ENCODE measurements at regions of chr19 and their contacts with region 1.

Region 1: DNA sequence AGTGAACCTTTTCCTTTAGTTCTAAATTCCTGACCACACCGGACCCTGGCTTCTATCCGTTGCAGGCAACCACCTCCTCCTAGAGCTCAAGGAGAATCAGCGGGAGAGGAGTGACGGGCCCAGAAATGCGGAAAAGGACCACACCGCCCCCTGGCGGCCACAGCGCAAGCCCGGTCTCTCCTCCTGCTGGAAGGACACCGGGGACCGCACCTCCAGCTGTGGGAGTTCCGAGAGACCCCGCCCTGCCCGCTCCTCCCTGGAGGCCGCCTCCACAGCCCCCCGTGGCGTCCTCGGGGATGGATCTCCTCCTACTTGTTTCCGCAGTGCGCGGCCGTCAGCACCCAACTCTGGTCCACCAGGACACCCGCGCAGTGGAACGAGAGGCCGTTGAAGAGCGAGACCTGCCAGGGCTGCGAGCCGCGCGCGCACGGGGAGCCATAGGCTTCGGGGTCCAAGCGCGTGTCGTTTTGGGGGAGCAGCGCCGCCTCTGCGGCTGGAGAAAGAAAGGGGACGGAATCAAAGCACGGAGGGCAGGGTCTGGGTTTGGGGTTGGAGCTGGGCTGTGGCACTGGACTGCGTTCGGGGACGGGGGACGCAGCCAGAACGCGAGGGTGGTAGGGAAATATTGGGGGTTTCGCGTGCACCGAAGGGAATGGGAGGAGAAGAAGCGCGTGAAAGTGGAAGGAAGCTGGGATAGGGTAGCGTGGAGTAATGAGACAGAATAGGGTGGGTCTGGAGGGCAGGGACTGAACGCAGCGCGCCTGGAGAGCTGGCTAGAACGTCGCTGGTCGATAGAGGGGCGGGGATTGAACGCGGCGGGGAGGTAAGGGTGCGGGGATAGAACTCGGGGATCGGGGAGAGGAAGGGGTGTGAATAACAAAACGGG is 2.5 kb downstream of the KLK10 start:
- DNase-seq: peak in 2 of 3 donors; percentile 12 to 39
- H3K4me3 ChIP-seq: no peak overlapping the region
- H3K4me3 Mint-ChIP-seq: peak overlapping the region; percentile 69 to 95
- H3K27ac ChIP-seq: no peak overlapping the region
- H3K27ac Mint-ChIP-seq: peak overlapping the region in 1 of 7 donors; percentile 57
- H3K4me1 ChIP-seq: peaks cover 24 to 26% of the 10 kb centered on the region in 2 donors
- H3K4me1 Mint-ChIP-seq: peaks cover 34% of the 10 kb centered on the region
- H3K27me3 ChIP-seq: peaks cover 19 to 53% of the 10 kb centered on the region in 2 donors
- H3K27me3 Mint-ChIP-seq: peaks cover 63 to 73% (median 65%) of the 10 kb centered on the region in 3 donors
- CTCF ChIP-seq: peak; percentile 73

Region 2: GRCh38 chr19:51166846-51167490 is 149.9 kb after region 1 on chr19:
- intact Hi-C with region 1: loop called (anchors 5 kb)
- DNase-seq: peak; percentile 58 to 70 (median 64)
- H3K4me3 ChIP-seq: peak overlapping the region in 1 of 3 experiments; percentile 36
- H3K4me3 Mint-ChIP-seq: peak overlapping the region; percentile 39 to 59
- H3K27ac ChIP-seq: peak overlapping the region in 1 of 2 donors; percentile 2
- H3K27ac Mint-ChIP-seq: peak overlapping the region in 6 of 7 donors; percentile 5 to 68 (median 44)
- H3K4me1 ChIP-seq: peaks cover 18 to 19% of the 10 kb centered on the region in 2 donors
- H3K4me1 Mint-ChIP-seq: peaks cover 23% of the 10 kb centered on the region
- H3K27me3 ChIP-seq: no peaks in the 10 kb centered on the region
- H3K27me3 Mint-ChIP-seq: peaks cover 0 to 8% (median 3%) of the 10 kb centered on the region in 3 donors
- CTCF ChIP-seq: no peak

Region 3: DNA sequence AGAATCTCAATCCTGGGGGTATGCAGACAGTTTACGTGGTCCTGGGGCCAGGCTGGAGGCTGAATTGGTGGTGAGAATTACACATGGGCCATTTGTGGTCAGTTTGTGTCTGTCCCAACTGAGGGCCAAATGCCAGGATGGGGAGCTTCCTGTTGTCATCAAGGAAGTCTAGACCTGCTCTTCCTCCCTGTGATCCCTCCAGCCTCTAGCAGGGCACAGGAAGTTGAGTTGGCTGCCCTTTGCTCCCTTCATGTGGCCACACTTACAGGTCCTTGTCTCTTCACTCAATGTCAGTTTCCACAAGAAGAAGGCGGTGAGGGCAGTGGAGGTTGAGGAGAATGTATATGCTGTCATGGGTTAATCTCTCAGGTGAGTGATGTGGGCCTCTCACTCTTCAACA is 155.2 kb after region 1 on chr19:
- intact Hi-C with region 1: loop called (anchors 5 kb)
- DNase-seq: peak in 1 of 3 donors; percentile 10
- H3K4me3 ChIP-seq: no peak overlapping the region
- H3K4me3 Mint-ChIP-seq: no peak overlapping the region
- H3K27ac ChIP-seq: no peak overlapping the region
- H3K27ac Mint-ChIP-seq: no peak overlapping the region
- H3K4me1 ChIP-seq: peaks cover 10 to 16% of the 10 kb centered on the region in 2 donors
- H3K4me1 Mint-ChIP-seq: peaks cover 13% of the 10 kb centered on the region
- H3K27me3 ChIP-seq: no peaks in the 10 kb centered on the region
- H3K27me3 Mint-ChIP-seq: peaks cover 0 to 8% (median 3%) of the 10 kb centered on the region in 3 donors
- CTCF ChIP-seq: no peak

Measured in CD14-positive monocyte (primary cell).